Right ventricle myocardium superior (tissue), 1 donor: ENCODE measurements at regions of chr19 and their contacts with region 1.

Region 1: GRCh38 chr19:46192992-46193650 is 36.4 kb upstream of the IGFL1 start:
- DNase-seq: no peak
- ATAC-seq: peak; percentile 46

Region 2: GRCh38 chr19:46021531-46022041 is 171.5 kb before region 1 on chr19:
- intact Hi-C with region 1: loop called (anchors 10 kb)
- DNase-seq: no peak
- ATAC-seq: no peak

Region 3: DNA sequence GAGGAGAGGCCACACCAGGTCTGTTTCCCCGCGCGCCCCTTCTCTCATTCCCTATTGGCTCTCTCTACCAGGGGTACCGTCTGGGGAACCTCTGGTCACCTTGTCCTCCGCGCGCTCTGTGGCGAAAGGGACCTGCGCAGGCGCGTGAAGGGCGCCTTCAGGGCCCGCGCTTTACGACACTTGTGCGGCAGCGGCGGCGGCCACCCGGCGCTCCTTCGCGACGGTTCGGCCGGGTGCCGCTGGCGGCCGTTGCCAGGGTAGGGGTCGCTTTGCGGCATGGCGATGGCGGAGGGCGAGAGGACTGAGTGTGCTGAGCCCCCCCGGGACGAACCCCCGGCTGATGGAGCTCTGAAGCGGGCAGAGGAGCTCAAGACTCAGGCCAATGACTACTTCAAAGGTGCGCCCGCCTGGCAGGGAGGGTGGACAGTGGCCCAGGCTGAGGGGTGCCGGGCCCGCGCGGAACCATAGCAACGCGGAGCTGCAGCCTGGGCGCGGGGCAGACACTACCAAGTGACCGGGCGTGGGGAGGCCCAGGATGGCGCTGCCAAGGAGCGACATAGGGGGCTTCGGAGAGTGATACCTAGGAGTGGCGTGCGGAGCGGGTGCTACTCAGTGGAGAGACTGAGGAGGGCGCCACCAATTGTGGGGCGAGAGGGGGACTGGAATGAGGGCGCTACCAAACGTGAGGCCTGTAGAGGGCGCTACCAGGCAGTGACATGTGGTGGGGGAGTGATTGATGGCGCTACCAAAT is 153.9 kb after region 1 on chr19 and contains the start of gene PPP5C:
- intact Hi-C with region 1: no loop called
- DNase-seq: peak; percentile 96
- ATAC-seq: peak; percentile 85
- total RNA-seq, gene PPP5C: 69.5 TPM